CD4-positive, alpha-beta memory T cell (primary cell): ENCODE measurements at regions of chr19 and their contacts with region 1.

Region 1: GRCh38 chr19:38402967-38403861 is at the start of gene FAM98C:
- DNase-seq: peak; percentile 97 to 99 (median 98)
- H3K4me3 ChIP-seq: peak within 1 kb of the TSS; percentile 52 to 94
- H3K4me3 Mint-ChIP-seq: peak within 1 kb of the TSS; percentile 89 to 95 (median 90)
- H3K27ac ChIP-seq: peak within 1 kb of the TSS; percentile 77
- H3K27ac Mint-ChIP-seq: peak within 1 kb of the TSS; percentile 88 to 97 (median 96)
- H3K4me1 ChIP-seq: peaks cover 15% of the 10 kb centered on the region
- H3K4me1 Mint-ChIP-seq: peaks cover 2 to 17% (median 13%) of the 10 kb centered on the region in 4 donors
- H3K27me3 ChIP-seq: no peaks in the 10 kb centered on the region
- H3K27me3 Mint-ChIP-seq: no peaks in the 10 kb centered on the region
- total RNA-seq, gene FAM98C: 53.1 to 53.8 TPM

Region 2: GRCh38 chr19:38374429-38375176 is 28.6 kb before region 1 on chr19 and contains the start of gene PSMD8:
- CTCF ChIA-PET with region 1: interaction called, 31 read pairs
- POLR2A ChIA-PET with region 1: interaction called, 77 read pairs
- intact Hi-C with region 1: loop called (anchors 1 kb)
- DNase-seq: peak; percentile 98 to 99 (median 99)
- H3K4me3 ChIP-seq: peak within 1 kb of the TSS; percentile 71 to 97
- H3K4me3 Mint-ChIP-seq: peak within 1 kb of the TSS; percentile 96 to 99 (median 98)
- H3K27ac ChIP-seq: peak within 1 kb of the TSS; percentile 94
- H3K27ac Mint-ChIP-seq: peak within 1 kb of the TSS; percentile 90 to 99 (median 98)
- H3K4me1 ChIP-seq: peaks cover 30% of the 10 kb centered on the region
- H3K4me1 Mint-ChIP-seq: peaks cover 19 to 34% (median 24%) of the 10 kb centered on the region in 4 donors
- H3K27me3 ChIP-seq: no peaks in the 10 kb centered on the region
- H3K27me3 Mint-ChIP-seq: peaks cover 2% of the 10 kb centered on the region in 2 donors
- total RNA-seq, gene PSMD8: 89.6 to 90.6 TPM

Region 3: GRCh38 chr19:38514812-38515633 is 111.8 kb after region 1 on chr19:
- CTCF ChIA-PET with region 1: interaction called, 34 read pairs
- POLR2A ChIA-PET with region 1: interaction called, 6 read pairs
- intact Hi-C with region 1: loop called (anchors 2 kb)
- DNase-seq: peak; percentile 74 to 79 (median 77)
- H3K4me3 ChIP-seq: no peak overlapping the region
- H3K4me3 Mint-ChIP-seq: peak overlapping the region in 3 of 8 donors; percentile 20 to 45 (median 22)
- H3K27ac ChIP-seq: no peak overlapping the region
- H3K27ac Mint-ChIP-seq: peak overlapping the region in 5 of 7 donors; percentile 35 to 57 (median 43)
- H3K4me1 ChIP-seq: peaks cover 19% of the 10 kb centered on the region
- H3K4me1 Mint-ChIP-seq: peaks cover 9 to 22% (median 16%) of the 10 kb centered on the region in 4 donors
- H3K27me3 ChIP-seq: no peaks in the 10 kb centered on the region
- H3K27me3 Mint-ChIP-seq: peaks cover 0 to 2% of the 10 kb centered on the region in 2 donors

Region 4: GRCh38 chr19:38647368-38647965 is 244.3 kb after region 1 on chr19 and contains the start of gene ACTN4:
- CTCF ChIA-PET with region 1: interaction called, 10 read pairs
- POLR2A ChIA-PET with region 1: interaction called, 6 read pairs
- intact Hi-C with region 1: no loop called
- DNase-seq: peak; percentile 98 to 100 (median 100)
- H3K4me3 ChIP-seq: peak within 1 kb of the TSS; percentile 80 to 81
- H3K4me3 Mint-ChIP-seq: peak within 1 kb of the TSS; percentile 91 to 98 (median 95)
- H3K27ac ChIP-seq: peak within 1 kb of the TSS; percentile 74
- H3K27ac Mint-ChIP-seq: peak within 1 kb of the TSS; percentile 85 to 94 (median 91)
- H3K4me1 ChIP-seq: peaks cover 50% of the 10 kb centered on the region
- H3K4me1 Mint-ChIP-seq: peaks cover 29 to 52% (median 41%) of the 10 kb centered on the region in 4 donors
- H3K27me3 ChIP-seq: no peaks in the 10 kb centered on the region
- H3K27me3 Mint-ChIP-seq: no peaks in the 10 kb centered on the region
- total RNA-seq, gene ACTN4: 151 to 155 TPM

Region 5: GRCh38 chr19:38877781-38878574 is 474.8 kb after region 1 on chr19 and contains the start of gene RINL:
- CTCF ChIA-PET with region 1: interaction called, 6 read pairs
- POLR2A ChIA-PET with region 1: interaction called, 10 read pairs
- intact Hi-C with region 1: no loop called
- DNase-seq: peak; percentile 68 to 82 (median 72)
- H3K4me3 ChIP-seq: peak within 1 kb of the TSS; percentile 41 to 73
- H3K4me3 Mint-ChIP-seq: peak within 1 kb of the TSS; percentile 79 to 94 (median 88)
- H3K27ac ChIP-seq: peak within 1 kb of the TSS; percentile 89
- H3K27ac Mint-ChIP-seq: peak within 1 kb of the TSS; percentile 96 to 99 (median 97)
- H3K4me1 ChIP-seq: peaks cover 49% of the 10 kb centered on the region
- H3K4me1 Mint-ChIP-seq: peaks cover 21 to 40% (median 30%) of the 10 kb centered on the region in 4 donors
- H3K27me3 ChIP-seq: no peaks in the 10 kb centered on the region
- H3K27me3 Mint-ChIP-seq: no peaks in the 10 kb centered on the region
- total RNA-seq, gene RINL: 64.4 to 65.9 TPM

Region 6: DNA sequence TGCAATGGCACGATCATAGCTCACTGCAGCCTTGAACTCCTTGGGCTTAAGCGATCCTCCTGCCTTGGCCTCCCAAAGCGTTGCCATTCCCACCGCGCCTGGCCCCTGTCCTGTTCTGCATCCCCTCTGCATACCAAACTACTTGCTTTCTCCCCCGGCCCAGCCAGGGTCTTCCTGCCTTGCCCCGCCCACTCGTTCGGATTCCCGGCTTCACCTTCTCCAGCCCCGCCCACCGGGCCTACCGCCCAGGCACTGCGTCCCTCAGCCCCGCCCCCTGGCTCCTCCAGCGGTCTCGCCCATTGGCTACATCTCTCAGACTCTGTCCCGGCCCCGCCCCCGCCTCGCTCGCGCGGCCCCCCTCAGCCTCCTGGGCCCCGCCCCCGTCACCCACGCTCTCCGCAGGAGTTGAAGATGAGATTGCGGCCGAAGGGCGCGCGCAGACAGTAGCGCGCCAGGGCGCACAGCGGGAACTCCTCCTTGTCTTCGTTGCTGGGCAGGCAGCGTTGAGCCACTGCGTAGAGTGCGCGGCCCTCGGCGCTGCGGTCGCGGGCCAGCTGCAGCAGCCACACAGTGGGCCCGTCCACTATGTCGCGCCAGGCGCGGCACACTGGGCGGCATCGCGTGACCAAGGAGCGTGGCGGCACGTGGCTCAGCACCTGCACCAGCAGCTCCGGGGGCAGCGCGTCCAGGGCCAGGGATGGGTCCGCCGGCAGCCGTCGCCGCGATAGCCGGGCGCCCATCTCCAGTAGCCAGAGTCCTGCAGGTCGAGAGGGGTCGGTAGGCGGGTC is 546.6 kb after region 1 on chr19:
- CTCF ChIA-PET with region 1: interaction called, 3 read pairs
- POLR2A ChIA-PET with region 1: no interaction called
- intact Hi-C with region 1: loop called (anchors 1 kb)
- DNase-seq: peak; percentile 66 to 75 (median 74)
- H3K4me3 ChIP-seq: peak overlapping the region in 1 of 2 donors; percentile 24
- H3K4me3 Mint-ChIP-seq: peak overlapping the region; percentile 63 to 80 (median 72)
- H3K27ac ChIP-seq: no peak overlapping the region
- H3K27ac Mint-ChIP-seq: peak overlapping the region in 3 of 7 donors; percentile 66 to 88 (median 68)
- H3K4me1 ChIP-seq: peaks cover 8% of the 10 kb centered on the region
- H3K4me1 Mint-ChIP-seq: peaks cover 11 to 17% (median 14%) of the 10 kb centered on the region in 4 donors
- H3K27me3 ChIP-seq: no peaks in the 10 kb centered on the region
- H3K27me3 Mint-ChIP-seq: peaks cover 6 to 9% of the 10 kb centered on the region in 2 donors